Panc1 (cell line): ENCODE measurements at regions of chr11 and their contacts with region 1.

Region 1: DNA sequence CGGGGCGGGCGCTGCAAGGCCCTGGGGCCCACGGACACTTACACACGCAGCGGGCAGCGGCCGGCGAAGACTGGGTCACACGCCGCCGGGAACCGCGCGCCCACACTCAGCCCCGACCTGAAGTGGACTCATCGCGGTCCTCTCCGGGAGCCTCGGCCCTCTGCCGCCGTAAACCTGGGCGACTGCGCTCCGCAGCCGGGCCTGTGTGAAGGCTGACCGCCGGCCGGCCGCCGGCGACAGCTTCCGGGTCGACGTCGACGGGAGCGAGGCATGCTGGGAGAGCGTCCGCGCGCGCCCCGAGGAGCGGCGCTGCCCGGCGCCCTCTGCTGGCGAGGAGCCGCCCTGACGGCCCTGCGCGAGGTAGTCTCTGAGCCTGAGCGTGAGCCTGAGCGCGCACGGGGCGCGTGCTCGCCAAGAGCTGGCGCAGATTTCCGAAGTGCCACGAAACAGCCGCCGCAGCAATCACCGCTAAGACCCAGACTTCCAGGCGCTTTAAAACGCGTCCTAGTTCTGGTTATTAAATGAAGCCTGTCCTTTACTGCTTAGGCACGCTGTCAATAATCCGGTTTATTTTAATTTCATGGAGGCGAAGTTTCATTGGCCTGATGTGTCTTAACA is at the start of gene SNX19:
- DNase-seq: peak; percentile 69
- ATAC-seq: peak; percentile 99
- H3K4me3 ChIP-seq: peak within 1 kb of the TSS; percentile 62 to 94
- H3K27ac ChIP-seq: peak within 1 kb of the TSS; percentile 90
- H3K4me1 ChIP-seq: 0 out of 2 replicates have a peak, but pooled peaks cover 3% of the 10 kb centered on the region
- H3K27me3 ChIP-seq: no peaks in the 10 kb centered on the region
- CTCF ChIP-seq: peak; percentile 100
- total RNA-seq, gene SNX19: 79.3 TPM

Region 2: DNA sequence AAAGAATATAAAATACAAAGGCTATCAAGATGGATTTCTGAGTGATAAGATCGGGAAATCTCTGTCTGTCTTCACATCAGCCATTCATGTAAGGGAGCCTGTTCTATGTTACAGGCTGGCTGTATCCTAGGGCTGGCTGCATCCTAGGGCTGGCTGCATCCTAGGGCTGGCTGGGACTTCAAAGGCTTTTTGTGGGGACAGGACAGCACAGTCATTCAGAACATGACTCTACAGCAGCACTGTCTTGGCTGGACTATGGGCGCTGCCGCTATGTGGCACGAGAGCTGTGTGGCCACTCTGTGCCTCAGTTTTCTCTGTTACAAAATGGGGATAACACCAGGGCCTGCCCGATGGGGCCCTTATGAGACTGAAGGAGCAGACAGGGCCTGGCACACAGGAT is 498.1 kb before region 1 on chr11:
- CTCF ChIA-PET with region 1: interaction called, 12 read pairs
- POLR2A ChIA-PET with region 1: no interaction called
- in situ Hi-C with region 1: no loop called
- intact Hi-C with region 1: no loop called
- DNase-seq: no peak
- ATAC-seq: no peak
- H3K4me3 ChIP-seq: no peak overlapping the region
- H3K27ac ChIP-seq: no peak overlapping the region
- H3K4me1 ChIP-seq: no peaks in the 10 kb centered on the region
- H3K27me3 ChIP-seq: peaks cover 6% of the 10 kb centered on the region; the same call in 1 of the 2 replicates
- CTCF ChIP-seq: no peak

Region 3: DNA sequence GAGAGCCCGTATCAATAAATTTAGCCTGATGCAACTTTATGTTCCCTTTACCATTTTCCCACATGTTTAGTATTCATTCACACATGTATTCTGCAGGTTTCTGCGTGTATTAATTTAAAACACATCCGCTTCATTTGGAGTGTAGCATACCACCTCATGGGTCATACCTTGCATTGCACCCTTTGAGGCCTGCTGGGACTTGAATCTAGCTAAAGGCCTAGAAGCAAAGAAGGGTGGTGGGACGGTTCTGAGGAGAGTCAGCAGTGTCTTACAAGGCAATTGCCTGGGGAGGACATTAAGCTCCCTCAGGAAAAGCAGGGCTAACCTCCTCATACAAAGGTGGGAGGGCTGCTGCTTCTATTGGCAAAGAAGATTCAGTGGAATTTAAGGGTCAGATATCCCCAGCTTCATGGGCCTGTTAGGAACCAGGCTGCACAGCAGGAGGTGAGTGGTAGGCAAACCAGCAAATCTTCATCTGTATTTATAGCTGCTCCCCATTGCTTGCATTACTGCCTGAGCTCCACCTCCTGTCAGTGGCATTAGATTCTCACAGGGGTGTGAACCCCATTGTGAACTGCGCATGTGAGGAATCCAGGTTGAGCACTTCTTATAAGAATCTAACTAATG is 15.9 kb after region 1 on chr11:
- CTCF ChIA-PET with region 1: no interaction called
- POLR2A ChIA-PET with region 1: interaction called, 10 read pairs
- in situ Hi-C with region 1: no loop called
- intact Hi-C with region 1: no loop called
- DNase-seq: no peak
- ATAC-seq: no peak
- H3K4me3 ChIP-seq: no peak overlapping the region
- H3K27ac ChIP-seq: no peak overlapping the region
- H3K4me1 ChIP-seq: no peaks in the 10 kb centered on the region
- H3K27me3 ChIP-seq: peaks cover 17% of the 10 kb centered on the region
- CTCF ChIP-seq: no peak

Region 4: GRCh38 chr11:132704781-132705375 is 1788.5 kb after region 1 on chr11:
- CTCF ChIA-PET with region 1: no interaction called
- POLR2A ChIA-PET with region 1: no interaction called
- in situ Hi-C with region 1: no loop called
- intact Hi-C with region 1: no loop called
- DNase-seq: no peak
- ATAC-seq: no peak
- H3K4me3 ChIP-seq: no peak overlapping the region
- H3K27ac ChIP-seq: no peak overlapping the region
- H3K4me1 ChIP-seq: no peaks in the 10 kb centered on the region
- H3K27me3 ChIP-seq: no peaks in the 10 kb centered on the region
- CTCF ChIP-seq: no peak